Ascending aorta (tissue), 2 donors: ENCODE measurements at regions of chr7 and their contacts with region 1.

Region 1: DNA sequence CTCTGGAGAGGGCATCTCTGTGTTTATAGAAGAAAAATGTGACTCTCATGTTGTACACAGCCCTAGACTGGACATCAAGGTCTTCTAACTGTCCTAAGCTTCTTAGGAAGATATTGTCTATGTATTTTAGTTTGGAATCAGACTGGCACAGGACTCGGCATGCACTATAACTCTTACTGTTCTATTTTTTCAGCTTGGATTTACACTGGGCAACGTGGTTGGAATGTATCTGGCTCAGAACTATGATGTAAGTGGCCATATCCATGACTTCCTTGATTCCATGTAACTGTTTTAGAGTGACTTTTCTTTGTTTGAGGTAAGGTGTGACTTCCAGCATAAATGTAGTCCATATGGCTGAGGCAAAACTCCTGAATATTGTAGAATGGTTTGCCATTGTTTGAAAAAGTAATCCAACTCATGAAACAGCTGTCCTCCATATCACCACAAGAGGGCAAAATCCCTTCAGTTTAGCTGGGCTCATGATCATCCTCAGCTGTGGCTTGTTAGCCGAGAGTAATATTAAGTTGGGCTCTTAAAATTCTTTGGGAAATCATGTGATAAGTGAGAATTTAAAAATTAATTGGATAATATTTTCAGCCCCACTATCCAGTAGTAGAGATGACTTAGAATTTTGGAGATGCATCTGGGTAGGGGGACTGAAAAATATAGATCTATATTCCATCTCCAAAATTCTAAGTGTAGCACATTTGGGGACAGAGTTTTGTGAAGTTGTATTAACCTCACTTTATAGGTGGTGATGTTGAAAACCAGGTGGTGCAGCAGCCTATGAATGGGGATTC is 10.4 kb downstream of the STMP1 start:
- DNase-seq: no peak
- H3K4me3 ChIP-seq: no peak overlapping the region
- H3K27ac ChIP-seq: peak overlapping the region; percentile 48 to 52
- H3K4me1 ChIP-seq: peaks cover 0 to 26% of the 10 kb centered on the region in 2 donors
- H3K27me3 ChIP-seq: no peaks in the 10 kb centered on the region
- CTCF ChIP-seq: peak; percentile 66 to 80 (median 71)

Region 2: DNA sequence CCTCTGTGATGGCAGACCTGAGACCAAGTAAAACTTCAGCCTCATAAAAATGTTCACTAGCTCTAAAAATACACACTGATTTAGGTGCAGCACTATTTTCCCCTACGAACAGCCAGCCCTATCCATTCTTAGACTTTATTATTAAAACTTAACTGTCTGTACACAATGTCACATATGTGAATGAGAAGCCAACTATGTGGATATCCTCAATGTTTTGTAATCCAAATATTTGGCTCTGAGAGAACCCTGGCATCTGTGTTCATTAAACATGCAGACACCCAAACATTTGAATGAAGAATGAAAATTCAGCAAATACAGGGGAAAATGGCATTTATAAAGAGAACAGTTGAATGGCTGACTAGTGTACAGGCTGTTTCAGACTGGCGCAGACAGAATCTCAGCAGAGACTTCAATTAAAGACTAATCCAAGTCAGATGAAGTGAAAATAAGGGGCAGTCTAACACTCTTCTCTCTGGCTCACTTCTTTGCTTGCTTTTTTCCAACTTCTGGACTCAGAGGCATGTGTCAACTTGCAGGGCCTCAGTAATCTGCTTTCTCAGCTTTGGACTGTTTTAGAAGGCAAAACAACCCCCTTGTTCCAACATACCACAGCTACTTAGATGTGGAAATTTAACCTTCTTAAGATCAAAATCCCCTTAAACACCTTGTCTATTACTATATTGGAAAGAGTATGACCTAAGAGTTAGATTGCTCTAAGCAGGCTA is 123.2 kb after region 1 on chr7:
- intact Hi-C with region 1: loop called (anchors 2 kb)
- DNase-seq: no peak
- H3K4me3 ChIP-seq: no peak overlapping the region
- H3K27ac ChIP-seq: peak overlapping the region; percentile 81 to 87
- H3K4me1 ChIP-seq: peaks cover 7 to 28% of the 10 kb centered on the region in 2 donors
- H3K27me3 ChIP-seq: no peaks in the 10 kb centered on the region
- CTCF ChIP-seq: no peak